ENCODE measurements at regions of chr11 and their contacts with region 1.

Region 1: GRCh38 chr11:44556735-44557409 is 8.6 kb upstream of the CD82 start:
- DNase-seq: peak; percentile 78
- ATAC-seq: peak; percentile 87

Region 2: DNA sequence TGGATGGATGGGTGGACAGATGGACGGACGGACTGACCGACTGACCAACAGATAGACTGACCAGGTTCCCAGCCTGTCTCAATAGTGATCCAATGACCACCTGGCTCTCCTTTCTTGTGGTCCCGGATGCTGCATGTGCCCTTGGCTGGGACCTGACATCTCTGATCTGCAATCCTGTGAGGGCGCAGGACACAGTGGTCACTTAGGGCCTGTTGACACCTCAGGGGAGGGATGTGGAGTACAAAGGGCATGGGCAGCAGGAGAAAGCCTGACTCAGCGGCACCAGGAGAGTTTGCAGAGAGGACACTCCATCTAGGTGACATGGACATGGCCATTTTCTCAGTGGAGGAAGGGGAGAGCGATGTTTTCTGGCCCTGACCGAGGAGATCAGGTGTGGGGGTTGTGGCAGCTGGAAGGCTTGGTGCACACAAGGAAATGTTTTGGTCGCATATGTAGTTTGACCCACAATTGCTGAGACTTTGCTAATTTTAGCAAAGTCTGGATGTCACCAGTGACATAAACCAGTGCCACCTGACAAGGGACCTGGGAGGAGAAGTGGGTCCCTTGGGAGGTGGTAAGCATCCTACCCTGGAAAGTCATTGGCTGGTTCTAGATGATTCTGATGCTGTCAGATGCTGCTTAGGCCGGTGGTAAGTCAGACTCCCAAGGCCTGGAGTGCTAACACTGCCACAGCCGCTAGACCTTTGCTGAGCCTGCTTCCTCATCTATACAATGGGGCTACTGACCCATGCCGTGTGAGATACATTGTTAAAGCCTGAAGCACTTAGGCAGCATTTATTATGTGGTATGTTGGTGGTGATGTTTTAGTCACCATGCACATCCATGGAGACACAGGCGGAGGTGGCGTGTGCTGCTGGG is 59.3 kb after region 1 on chr11:
- intact Hi-C with region 1: loop called (anchors 2 kb)
- DNase-seq: peak; percentile 5
- ATAC-seq: no peak

Region 3: GRCh38 chr11:44911029-44911814 is 354.4 kb after region 1 on chr11:
- intact Hi-C with region 1: loop called (anchors 10 kb)
- DNase-seq: peak; percentile 78
- ATAC-seq: peak; percentile 82

Region 4: GRCh38 chr11:45042557-45042956 is 485.7 kb after region 1 on chr11:
- intact Hi-C with region 1: no loop called
- DNase-seq: no peak
- ATAC-seq: peak; percentile 30